Stomach (tissue), 19 donors: ENCODE measurements at regions of chr11 and their contacts with region 1.

Region 1: DNA sequence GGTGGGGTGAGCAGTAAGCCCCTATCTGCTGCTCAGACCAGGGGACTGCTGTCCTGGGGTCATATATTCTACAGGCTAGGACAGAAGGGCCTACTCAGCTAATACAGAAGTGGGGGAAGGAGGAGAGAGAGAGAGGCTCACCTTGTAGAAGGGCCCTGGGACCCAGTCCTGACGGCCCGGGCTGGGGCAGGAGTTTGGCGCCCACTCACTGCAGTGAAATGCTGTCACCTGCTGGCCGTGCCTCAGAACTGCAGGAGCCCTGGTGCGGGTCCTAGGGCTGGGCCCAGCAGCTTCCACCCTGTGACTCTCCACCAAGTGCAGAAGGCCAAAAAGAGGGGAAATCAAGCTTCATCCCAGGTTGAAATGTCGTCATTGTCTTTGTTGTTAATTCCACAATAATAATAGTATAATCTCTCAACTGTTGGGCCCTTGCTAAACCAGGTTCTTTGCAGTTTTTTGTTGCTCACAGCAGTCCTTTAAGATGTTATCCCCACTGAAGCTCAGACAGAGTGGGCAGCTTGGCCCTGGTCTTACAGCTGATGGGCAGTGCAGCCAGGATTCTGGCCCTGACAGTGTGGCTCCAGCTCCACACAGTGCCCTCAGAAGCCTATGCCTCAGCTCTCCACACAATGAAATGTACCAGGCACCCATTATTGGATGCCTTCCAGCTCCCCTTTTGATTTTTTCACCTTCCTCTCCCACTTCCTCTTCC is 29.6 kb downstream of the TRIM29 start:
- DNase-seq: peak; percentile 80 to 87
- H3K4me3 ChIP-seq: no peak overlapping the region
- H3K27ac ChIP-seq: no peak overlapping the region
- H3K4me1 ChIP-seq: no peaks in the 10 kb centered on the region
- H3K27me3 ChIP-seq: peaks cover 0 to 44% (median 6%) of the 10 kb centered on the region in 3 donors
- CTCF ChIP-seq: peak in 5 of 7 experiments; percentile 94 to 99 (median 97)
- EP300 ChIP-seq: no peak
- POLR2A ChIP-seq: no peak

Region 2: GRCh38 chr11:119481021-119481666 is 627.2 kb before region 1 on chr11:
- intact Hi-C with region 1: loop called (anchors 10 kb)
- DNase-seq: peak; percentile 91 to 95
- H3K4me3 ChIP-seq: no peak overlapping the region
- H3K27ac ChIP-seq: no peak overlapping the region
- H3K4me1 ChIP-seq: peaks cover 0 to 15% (median 13%) of the 10 kb centered on the region in 4 donors
- H3K27me3 ChIP-seq: peaks cover 0 to 16% (median 0%) of the 10 kb centered on the region in 3 donors
- CTCF ChIP-seq: peak in 6 of 7 experiments; percentile 29 to 97 (median 96)
- EP300 ChIP-seq: no peak
- POLR2A ChIP-seq: no peak

Region 3: GRCh38 chr11:119666463-119667131 is 441.7 kb before region 1 on chr11:
- intact Hi-C with region 1: loop called (anchors 2 kb)
- DNase-seq: peak; percentile 84 to 89
- H3K4me3 ChIP-seq: no peak overlapping the region
- H3K27ac ChIP-seq: no peak overlapping the region
- H3K4me1 ChIP-seq: peaks cover 8 to 30% (median 23%) of the 10 kb centered on the region in 4 donors
- H3K27me3 ChIP-seq: no peaks in the 10 kb centered on the region
- CTCF ChIP-seq: peak in 6 of 7 experiments; percentile 5 to 96 (median 92)
- EP300 ChIP-seq: no peak
- POLR2A ChIP-seq: no peak